Tibial artery (tissue), 4 donors: ENCODE measurements at regions of chr17 and their contacts with region 1.

Region 1: GRCh38 chr17:27245230-27245696 is 48.7 kb upstream of the WSB1 start:
- DNase-seq: peak; percentile 86 to 95
- H3K4me3 ChIP-seq: peak overlapping the region; percentile 8 to 32
- H3K27ac ChIP-seq: peak overlapping the region; percentile 93 to 96
- H3K4me1 ChIP-seq: peaks cover 6 to 94% (median 59%) of the 10 kb centered on the region in 4 donors
- H3K27me3 ChIP-seq: no peaks in the 10 kb centered on the region
- CTCF ChIP-seq: peak; percentile 46 to 59

Region 2: GRCh38 chr17:27306276-27306835 is 61.1 kb after region 1 on chr17:
- intact Hi-C with region 1: no loop called
- DNase-seq: no peak
- H3K4me3 ChIP-seq: no peak overlapping the region
- H3K27ac ChIP-seq: peak overlapping the region in 1 of 2 donors; percentile 23
- H3K4me1 ChIP-seq: peaks cover 0 to 75% (median 16%) of the 10 kb centered on the region in 4 donors
- H3K27me3 ChIP-seq: no peaks in the 10 kb centered on the region
- CTCF ChIP-seq: no peak

Region 3: DNA sequence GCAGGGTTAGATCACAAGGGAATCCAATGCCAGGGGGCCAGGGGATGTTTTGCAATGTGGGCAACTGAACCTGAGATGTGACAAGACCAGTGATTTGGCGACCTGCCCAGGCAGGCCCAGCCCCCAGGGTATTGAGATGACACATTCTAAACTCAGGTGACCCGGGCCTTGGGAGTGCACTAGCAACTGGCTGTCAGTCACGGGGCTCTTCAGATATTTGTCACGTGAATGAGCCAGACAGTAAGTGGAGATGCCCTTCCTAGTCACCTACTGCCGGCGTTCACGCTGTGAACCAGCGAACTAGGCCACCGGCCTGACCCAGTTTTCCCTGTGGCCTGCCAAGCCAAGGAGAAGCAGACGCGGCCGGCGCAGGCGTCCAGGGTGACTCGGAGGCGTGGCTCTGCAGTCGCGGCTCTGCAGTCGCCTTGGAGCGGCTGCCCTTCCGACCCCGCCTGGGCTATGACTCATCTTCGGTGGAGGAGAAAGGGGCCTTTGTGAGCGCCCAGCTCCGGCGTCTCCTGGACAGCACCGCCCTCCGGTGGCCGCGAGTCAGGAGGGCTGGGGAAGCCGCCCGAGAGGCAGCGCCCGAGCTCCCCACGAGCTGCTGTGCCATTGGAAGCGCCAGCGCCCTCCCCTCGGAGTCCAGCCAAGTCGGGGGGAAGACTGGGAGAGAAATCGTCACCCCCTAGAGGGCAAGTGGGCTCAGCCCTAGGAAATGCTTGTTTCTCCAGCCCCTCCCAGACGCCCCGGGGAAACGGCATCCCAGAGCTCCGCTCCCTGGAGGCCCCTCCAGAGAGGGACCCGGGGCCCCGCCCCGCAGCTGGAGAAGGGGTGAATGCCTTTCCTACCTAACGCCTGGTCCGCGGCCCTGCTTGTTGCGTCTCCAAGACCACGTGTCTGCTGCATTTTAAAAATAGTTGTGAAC is 87.5 kb after region 1 on chr17:
- intact Hi-C with region 1: loop called (anchors 2 kb)
- DNase-seq: peak; percentile 98 to 100
- H3K4me3 ChIP-seq: peak overlapping the region; percentile 48 to 62
- H3K27ac ChIP-seq: peak overlapping the region; percentile 86 to 95
- H3K4me1 ChIP-seq: peaks cover 6 to 24% (median 12%) of the 10 kb centered on the region in 4 donors
- H3K27me3 ChIP-seq: no peaks in the 10 kb centered on the region
- CTCF ChIP-seq: peak; percentile 91 to 95